Common myeloid progenitor, CD34-positive (primary cell): ENCODE measurements at regions of chr5 and their contacts with region 1.

Region 1: DNA sequence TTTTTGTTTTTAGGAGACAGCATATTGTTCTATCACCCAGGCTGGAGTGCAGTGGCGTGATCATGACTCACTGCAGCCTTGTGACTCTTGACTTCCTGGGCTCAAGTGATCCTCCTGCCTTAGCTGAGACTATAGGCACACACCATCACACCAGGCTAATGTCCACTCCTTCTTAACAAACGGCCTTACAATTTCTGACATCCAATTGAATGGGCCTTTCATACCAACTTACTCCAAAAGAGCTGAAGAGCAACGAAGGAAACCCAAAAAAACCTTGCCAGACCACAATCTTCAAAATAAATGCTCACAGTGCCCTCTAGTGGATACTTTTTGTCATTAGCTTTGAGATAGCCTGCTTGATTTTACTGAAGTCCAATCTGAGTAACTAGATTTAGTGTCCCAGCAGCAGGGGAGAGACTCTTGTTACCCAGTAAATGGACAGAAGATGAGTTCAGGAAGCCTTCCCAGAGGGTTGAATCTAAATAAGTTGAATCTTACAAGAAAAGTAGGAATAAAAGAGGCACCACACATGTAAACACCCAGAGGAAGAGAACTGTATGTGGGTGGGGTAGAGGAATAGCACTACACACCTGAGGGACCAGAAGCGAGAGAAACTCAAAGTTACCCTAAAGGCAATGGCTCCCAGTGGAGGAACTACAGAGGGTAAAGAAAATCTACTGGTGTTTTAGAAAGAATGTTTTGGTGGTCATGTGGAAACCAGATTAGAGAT is 9.3 kb downstream of the ZNF622 start:
- DNase-seq: peak; percentile 75 to 84 (median 77)
- H3K4me3 ChIP-seq: no peak overlapping the region
- H3K27ac ChIP-seq: peak overlapping the region in 1 of 2 experiments; percentile 22
- H3K4me1 ChIP-seq: peaks cover 0 to 6% (median 1%) of the 10 kb centered on the region in 4 experiments
- H3K27me3 ChIP-seq: no peaks in the 10 kb centered on the region

Region 2: DNA sequence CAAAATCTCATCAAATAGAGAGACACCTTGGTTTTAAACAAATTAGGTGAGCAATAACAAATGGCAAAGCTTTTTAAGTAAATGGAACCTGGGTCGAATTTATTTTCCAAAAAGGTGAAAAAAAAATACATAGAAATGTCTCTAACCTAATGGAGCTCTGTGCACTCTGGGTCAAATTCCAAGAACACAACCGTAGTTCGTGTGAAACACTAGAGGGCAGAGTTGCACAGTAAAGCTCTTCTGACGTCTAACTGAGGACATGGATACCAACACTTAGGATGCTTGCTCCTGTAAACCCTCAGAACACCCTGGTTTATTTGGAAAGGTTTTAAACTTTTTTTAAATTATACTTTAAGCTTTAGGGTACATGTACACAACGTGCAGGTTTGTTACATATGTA is 295.6 kb before region 1 on chr5:
- CTCF ChIA-PET with region 1: interaction called, 23 read pairs
- POLR2A ChIA-PET with region 1: no interaction called
- DNase-seq: peak; percentile 25 to 68 (median 63)
- H3K4me3 ChIP-seq: no peak overlapping the region
- H3K27ac ChIP-seq: no peak overlapping the region
- H3K4me1 ChIP-seq: no peaks in the 10 kb centered on the region
- H3K27me3 ChIP-seq: peaks cover 0 to 5% (median 0%) of the 10 kb centered on the region in 5 experiments

Region 3: GRCh38 chr5:16275458-16275857 is 180.8 kb before region 1 on chr5:
- CTCF ChIA-PET with region 1: no interaction called
- POLR2A ChIA-PET with region 1: no interaction called
- DNase-seq: no peak
- H3K4me3 ChIP-seq: no peak overlapping the region
- H3K27ac ChIP-seq: no peak overlapping the region
- H3K4me1 ChIP-seq: no peaks in the 10 kb centered on the region
- H3K27me3 ChIP-seq: no peaks in the 10 kb centered on the region

Region 4: GRCh38 chr5:16326137-16326536 is 130.1 kb before region 1 on chr5:
- CTCF ChIA-PET with region 1: no interaction called
- POLR2A ChIA-PET with region 1: no interaction called
- DNase-seq: no peak
- H3K4me3 ChIP-seq: no peak overlapping the region
- H3K27ac ChIP-seq: no peak overlapping the region
- H3K4me1 ChIP-seq: no peaks in the 10 kb centered on the region
- H3K27me3 ChIP-seq: no peaks in the 10 kb centered on the region

Region 5: GRCh38 chr5:16427587-16427986 is 28.7 kb before region 1 on chr5:
- CTCF ChIA-PET with region 1: no interaction called
- POLR2A ChIA-PET with region 1: no interaction called
- DNase-seq: no peak
- H3K4me3 ChIP-seq: no peak overlapping the region
- H3K27ac ChIP-seq: no peak overlapping the region
- H3K4me1 ChIP-seq: no peaks in the 10 kb centered on the region
- H3K27me3 ChIP-seq: peaks cover 0 to 16% (median 2%) of the 10 kb centered on the region in 5 experiments

Region 6: GRCh38 chr5:16471387-16471786 is 15.1 kb after region 1 on chr5:
- CTCF ChIA-PET with region 1: interaction called, 10 read pairs
- POLR2A ChIA-PET with region 1: interaction called, 3 read pairs
- DNase-seq: no peak
- H3K4me3 ChIP-seq: no peak overlapping the region
- H3K27ac ChIP-seq: no peak overlapping the region
- H3K4me1 ChIP-seq: peaks cover 0 to 8% (median 3%) of the 10 kb centered on the region in 4 experiments
- H3K27me3 ChIP-seq: no peaks in the 10 kb centered on the region